ENCODE measurements at regions of chr5 and their contacts with region 1.

Region 1: DNA sequence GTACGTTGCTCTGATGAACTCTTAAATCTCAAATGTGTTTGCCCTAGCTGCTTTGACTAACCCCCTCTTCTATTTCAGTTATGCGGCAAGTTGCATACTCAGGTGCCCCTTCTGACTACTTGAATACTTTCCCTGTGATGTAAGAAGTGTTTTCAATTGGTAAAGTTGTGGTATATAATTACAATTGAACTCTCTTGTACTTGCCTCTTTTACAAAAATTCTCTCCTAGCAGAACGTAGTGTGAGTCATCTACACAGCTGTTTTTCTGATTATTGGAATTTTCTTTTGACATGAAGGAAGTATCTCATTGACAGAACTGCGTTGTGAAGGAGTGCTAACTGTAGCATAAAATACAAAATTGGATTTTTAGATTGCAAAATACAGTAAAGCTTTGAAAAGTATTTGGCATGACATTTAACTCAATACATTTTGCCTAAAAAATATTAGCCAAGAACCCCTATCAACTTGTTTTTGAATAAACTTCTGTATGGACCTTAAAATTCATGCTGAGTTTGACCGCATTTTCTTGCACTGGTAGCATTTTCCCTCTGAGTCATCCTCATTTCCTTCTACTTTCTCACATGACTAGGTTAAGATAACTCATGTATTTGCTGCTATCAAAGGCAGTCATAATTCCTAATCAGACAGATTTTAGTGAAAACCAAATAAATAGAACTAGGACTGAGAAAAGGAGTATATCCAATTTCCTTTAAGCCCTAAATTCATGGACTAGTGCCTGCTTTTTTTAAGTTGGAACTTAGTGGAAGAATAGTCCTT is 6.3 kb downstream of the CRHBP start:
- DNase-seq: no peak
- ATAC-seq: no peak
- H3K4me3 ChIP-seq: no peak overlapping the region
- H3K27ac ChIP-seq: no peak overlapping the region
- H3K4me1 ChIP-seq: peaks cover 2 to 5% of the 10 kb centered on the region in 2 experiments; a peak in 1 of 4 replicates
- H3K27me3 ChIP-seq: no peaks in the 10 kb centered on the region
- CTCF ChIP-seq: no peak
- POLR2A ChIP-seq: no peak
- RAD21 ChIP-seq: no peak

Region 2: DNA sequence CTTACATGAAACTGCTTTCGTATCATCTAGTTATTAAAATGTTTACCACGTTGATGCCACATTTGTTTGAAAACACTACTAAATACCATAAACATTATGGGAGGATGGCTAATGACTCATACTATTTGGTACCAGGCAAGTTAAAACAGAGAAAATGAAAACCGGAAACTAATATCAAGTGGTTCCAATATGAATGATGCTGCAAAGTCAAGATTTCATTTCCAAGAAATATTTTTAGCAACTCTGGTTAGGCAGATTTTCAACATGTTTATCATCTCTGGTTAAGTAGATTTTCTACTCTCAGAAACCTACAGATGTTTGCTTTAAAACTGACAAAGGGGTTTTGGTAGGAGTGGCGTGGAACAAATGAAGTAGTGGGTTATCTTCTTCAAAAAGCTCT is 248.2 kb before region 1 on chr5:
- CTCF ChIA-PET with region 1: no interaction called
- POLR2A ChIA-PET with region 1: no interaction called
- RAD21 ChIA-PET with region 1: no interaction called
- intact Hi-C with region 1: no loop called
- DNase-seq: no peak
- ATAC-seq: no peak
- H3K4me3 ChIP-seq: no peak overlapping the region
- H3K27ac ChIP-seq: no peak overlapping the region
- H3K4me1 ChIP-seq: peaks cover 3 to 7% of the 10 kb centered on the region in 2 experiments; a peak in 3 of 4 replicates
- H3K27me3 ChIP-seq: no peaks in the 10 kb centered on the region
- CTCF ChIP-seq: no peak
- POLR2A ChIP-seq: no peak
- RAD21 ChIP-seq: no peak

Region 3: DNA sequence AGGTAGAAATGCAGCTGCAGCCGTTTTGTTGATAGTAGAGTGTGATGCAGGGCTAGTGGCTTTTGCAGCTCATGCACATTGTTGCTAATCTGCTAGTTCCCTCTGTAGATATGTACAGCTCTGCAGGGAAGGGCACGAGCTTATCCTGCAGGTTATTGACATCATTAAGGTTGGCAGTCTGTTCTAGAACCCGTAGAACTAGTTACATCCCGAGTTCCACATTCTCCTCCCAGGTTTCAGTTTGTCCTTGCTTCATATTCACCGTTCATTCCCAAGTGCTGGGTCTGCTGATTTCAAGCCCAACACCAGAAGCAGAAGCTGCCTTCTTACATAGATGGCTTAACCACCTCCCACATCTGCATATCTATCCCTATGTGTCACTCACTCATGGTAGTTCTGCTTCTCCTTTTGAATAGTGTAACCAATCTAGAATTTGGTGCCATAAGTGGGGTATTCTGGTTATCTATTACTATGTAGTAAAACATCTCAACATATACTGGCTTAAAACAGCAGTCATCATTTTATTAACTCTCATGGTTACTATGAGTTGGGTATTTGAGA is 31.8 kb after region 1 on chr5:
- CTCF ChIA-PET with region 1: no interaction called
- POLR2A ChIA-PET with region 1: no interaction called
- RAD21 ChIA-PET with region 1: no interaction called
- intact Hi-C with region 1: loop called (anchors 5 kb)
- DNase-seq: no peak
- ATAC-seq: no peak
- H3K4me3 ChIP-seq: no peak overlapping the region
- H3K27ac ChIP-seq: no peak overlapping the region
- H3K4me1 ChIP-seq: no peaks in the 10 kb centered on the region
- H3K27me3 ChIP-seq: no peaks in the 10 kb centered on the region
- CTCF ChIP-seq: no peak
- POLR2A ChIP-seq: no peak
- RAD21 ChIP-seq: no peak